ENCODE measurements at regions of chr2 and their contacts with region 1.

Region 1: DNA sequence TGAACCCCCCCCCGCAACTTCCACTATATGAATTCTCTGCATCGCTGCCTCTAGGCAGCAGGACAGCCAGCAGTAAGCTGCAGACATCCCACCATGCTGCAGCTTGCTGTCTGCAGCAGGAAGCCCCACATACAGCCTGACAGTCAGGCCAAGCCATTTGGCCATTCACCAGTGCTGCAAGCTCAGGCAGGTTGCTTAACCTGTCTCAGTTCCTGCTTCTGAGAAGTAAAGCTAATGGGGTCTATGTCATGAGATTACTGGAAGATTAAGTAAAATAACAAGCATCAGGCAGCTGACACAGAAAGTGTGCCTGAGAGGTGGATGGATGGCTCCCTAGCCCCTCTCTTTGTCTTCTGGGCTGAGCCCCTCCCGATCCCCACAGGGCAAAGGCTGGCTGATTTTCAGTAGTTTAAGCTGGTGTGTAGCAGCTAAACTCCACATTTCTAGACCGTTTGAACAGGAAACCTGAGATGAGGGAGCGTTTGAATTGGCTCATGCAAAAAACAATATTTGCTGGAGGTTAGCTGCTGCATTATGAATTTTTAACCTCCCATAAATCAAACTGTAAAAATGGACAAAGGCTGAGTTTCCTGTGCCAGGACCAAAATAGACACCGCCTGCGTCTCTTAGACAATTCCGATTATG is 193.8 kb upstream of the ARL4C start:
- DNase-seq: peak; percentile 42
- ATAC-seq: no peak
- H3K4me3 ChIP-seq: no peak overlapping the region
- H3K27ac ChIP-seq: peak overlapping the region; percentile 79
- H3K4me1 ChIP-seq: peaks cover 98% of the 10 kb centered on the region
- H3K27me3 ChIP-seq: no peaks in the 10 kb centered on the region
- CTCF ChIP-seq: 0 out of 2 replicates have a peak, but pooled peaks have one; percentile 3
- EP300 ChIP-seq: no peak
- POLR2A ChIP-seq: no peak
- RAD21 ChIP-seq: peak; percentile 10; the same call in 1 of the 2 replicates

Region 2: GRCh38 chr2:234587341-234588053 is 103.2 kb before region 1 on chr2:
- CTCF ChIA-PET with region 1: no interaction called
- POLR2A ChIA-PET with region 1: no interaction called
- in situ Hi-C with region 1: no loop called
- intact Hi-C with region 1: no loop called
- DNase-seq: no peak
- ATAC-seq: no peak
- H3K4me3 ChIP-seq: no peak overlapping the region
- H3K27ac ChIP-seq: no peak overlapping the region
- H3K4me1 ChIP-seq: peaks cover 14% of the 10 kb centered on the region; the same call in 1 of the 2 replicates
- H3K27me3 ChIP-seq: peaks cover 4 to 29% of the 10 kb centered on the region in 2 experiments; a peak in 4 of 5 replicates
- CTCF ChIP-seq: no peak
- EP300 ChIP-seq: no peak
- POLR2A ChIP-seq: no peak
- RAD21 ChIP-seq: no peak

Region 3: DNA sequence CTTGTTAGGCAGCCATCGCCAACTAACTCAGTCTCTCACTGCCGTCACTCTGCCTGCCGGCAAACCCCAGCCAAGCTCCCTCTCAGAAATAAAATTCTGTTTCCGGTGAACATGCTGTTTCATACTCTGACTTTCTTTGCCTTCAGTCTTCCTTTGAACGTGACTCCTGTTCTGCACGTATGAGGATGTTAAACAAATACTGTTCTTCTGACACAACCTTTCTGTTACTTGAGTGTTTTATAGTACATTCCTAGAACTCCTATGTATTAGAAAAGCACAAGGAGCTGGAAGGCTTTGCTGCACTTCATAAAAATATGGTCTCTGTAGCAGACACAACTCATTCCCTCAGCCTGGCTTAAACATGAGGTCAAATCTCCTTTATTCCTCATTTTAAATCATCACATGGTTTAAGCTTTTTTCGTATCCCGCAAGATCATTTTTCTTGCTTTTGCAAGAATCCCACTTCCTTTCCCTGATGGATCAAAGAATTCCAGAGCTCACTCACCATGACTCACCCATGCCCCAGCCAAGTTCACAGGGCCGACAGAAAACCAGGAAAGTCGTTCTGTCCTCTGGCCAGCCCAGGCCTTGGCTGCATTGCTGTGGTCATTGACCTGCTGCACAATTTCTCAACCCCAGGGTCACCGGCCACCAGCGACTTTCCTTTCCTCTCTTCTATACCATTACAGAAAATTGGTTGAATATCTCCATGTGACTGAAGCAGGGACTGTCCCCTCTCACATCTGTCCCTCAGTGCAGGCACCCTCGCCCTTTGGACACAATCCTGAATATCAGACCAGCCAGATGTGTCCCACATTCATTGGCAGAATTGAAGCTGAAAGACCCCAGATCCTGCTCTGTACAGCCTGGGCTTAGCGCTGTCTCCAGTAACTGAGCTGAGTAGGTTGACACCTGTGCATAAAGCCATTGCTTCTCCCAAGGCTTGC is 10.7 kb before region 1 on chr2:
- CTCF ChIA-PET with region 1: no interaction called
- POLR2A ChIA-PET with region 1: interaction called, 484 read pairs
- in situ Hi-C with region 1: no loop called
- intact Hi-C with region 1: loop called (anchors 1 kb)
- DNase-seq: peak; percentile 98
- ATAC-seq: peak; percentile 93
- H3K4me3 ChIP-seq: peak overlapping the region in 1 of 3 experiments; percentile 5; a peak in 1 of 6 replicates
- H3K27ac ChIP-seq: peak overlapping the region; percentile 86
- H3K4me1 ChIP-seq: peaks cover 97% of the 10 kb centered on the region
- H3K27me3 ChIP-seq: no peaks in the 10 kb centered on the region
- CTCF ChIP-seq: no peak
- EP300 ChIP-seq: peak; percentile 38 to 97; a peak in 3 of 4 replicates
- POLR2A ChIP-seq: no peak
- RAD21 ChIP-seq: peak; percentile 61; the same call in 1 of the 2 replicates

Region 4: DNA sequence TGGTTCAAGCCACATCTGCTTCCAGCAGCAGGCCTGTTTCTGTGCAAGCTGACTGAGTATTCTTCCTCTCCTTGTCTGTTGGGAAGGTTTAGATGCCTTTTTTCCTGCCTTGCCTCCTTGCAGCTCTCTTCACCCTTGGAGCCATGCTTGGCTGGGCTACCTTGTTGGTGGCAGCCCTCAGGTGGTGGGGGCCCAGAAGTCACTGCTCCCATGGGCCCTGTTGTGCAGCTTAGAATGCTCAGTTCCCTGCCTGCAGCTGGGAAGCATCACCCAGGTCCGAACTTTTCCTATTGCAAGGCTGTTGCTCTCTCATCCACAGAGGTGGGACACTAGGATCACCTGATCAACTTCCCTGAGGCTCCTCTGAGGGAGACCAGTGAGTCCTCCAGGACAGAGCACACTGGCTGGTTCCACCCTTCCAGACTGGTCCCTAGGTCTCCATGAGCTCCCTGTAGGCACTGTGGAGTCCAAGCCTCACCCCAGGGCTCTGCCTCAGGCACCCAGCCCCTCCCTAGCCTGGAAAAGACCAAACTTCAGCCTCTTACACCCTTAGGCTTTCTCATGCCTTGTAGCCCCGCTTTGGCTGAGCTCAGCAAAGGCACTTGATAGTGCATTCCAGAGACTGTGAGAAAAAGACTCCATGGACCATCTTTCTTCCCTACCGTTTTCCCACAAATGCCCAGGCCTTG is 41.9 kb after region 1 on chr2:
- CTCF ChIA-PET with region 1: no interaction called
- POLR2A ChIA-PET with region 1: interaction called, 10 read pairs
- in situ Hi-C with region 1: no loop called
- intact Hi-C with region 1: no loop called
- DNase-seq: no peak
- ATAC-seq: no peak
- H3K4me3 ChIP-seq: no peak overlapping the region
- H3K27ac ChIP-seq: no peak overlapping the region
- H3K4me1 ChIP-seq: peaks cover 45% of the 10 kb centered on the region
- H3K27me3 ChIP-seq: no peaks in the 10 kb centered on the region
- CTCF ChIP-seq: no peak
- EP300 ChIP-seq: no peak
- POLR2A ChIP-seq: no peak
- RAD21 ChIP-seq: no peak

Region 5: DNA sequence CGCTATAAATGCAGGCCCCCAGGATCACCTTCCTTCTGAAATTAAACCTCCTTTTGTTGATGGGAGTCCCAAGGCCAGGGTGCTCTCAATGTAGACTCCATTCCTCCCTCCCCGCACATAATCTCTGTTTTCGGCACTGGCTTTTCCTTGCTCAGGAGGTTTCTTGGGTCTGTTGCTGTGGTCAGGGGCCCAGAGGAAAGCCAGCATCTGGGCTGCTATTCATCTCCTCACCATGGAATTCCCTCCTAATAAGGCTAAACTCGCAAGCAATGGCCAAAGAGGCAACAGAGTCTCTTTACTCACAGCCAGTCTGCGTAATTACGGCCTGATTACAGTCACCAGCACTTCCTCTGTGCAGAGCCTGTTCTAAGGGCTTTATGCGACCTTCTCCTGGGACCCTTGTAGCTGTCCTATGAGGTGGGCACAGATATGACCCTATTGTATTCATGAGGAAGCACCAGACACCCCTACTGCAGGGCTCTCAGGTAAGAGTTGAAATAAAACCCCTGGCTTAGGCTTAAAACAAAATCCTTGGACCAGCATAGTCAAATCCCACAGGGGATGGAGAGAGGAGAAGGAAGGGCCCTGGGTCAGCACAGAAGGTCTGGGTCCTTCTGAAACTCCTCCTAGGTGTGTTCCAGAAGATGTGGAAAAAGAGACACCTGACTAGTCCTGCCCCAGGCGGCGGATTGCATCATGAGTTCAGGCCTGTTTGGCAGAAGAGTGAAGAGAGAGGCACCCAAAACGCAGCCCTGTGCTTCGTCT is 156.1 kb after region 1 on chr2:
- CTCF ChIA-PET with region 1: no interaction called
- POLR2A ChIA-PET with region 1: interaction called, 10 read pairs
- in situ Hi-C with region 1: no loop called
- intact Hi-C with region 1: loop called (anchors 5 kb)
- DNase-seq: no peak
- ATAC-seq: peak; percentile 14; the same call in 2 of the 3 replicates
- H3K4me3 ChIP-seq: no peak overlapping the region
- H3K27ac ChIP-seq: peak overlapping the region; percentile 77
- H3K4me1 ChIP-seq: peaks cover 96% of the 10 kb centered on the region
- H3K27me3 ChIP-seq: no peaks in the 10 kb centered on the region
- CTCF ChIP-seq: no peak
- EP300 ChIP-seq: no peak
- POLR2A ChIP-seq: no peak
- RAD21 ChIP-seq: no peak

Region 6: GRCh38 chr2:234873828-234874173 is 183.1 kb after region 1 on chr2:
- CTCF ChIA-PET with region 1: no interaction called
- POLR2A ChIA-PET with region 1: interaction called, 10 read pairs
- in situ Hi-C with region 1: no loop called
- intact Hi-C with region 1: no loop called
- DNase-seq: no peak
- ATAC-seq: no peak
- H3K4me3 ChIP-seq: no peak overlapping the region
- H3K27ac ChIP-seq: no peak overlapping the region
- H3K4me1 ChIP-seq: peaks cover 78% of the 10 kb centered on the region
- H3K27me3 ChIP-seq: no peaks in the 10 kb centered on the region
- CTCF ChIP-seq: no peak
- EP300 ChIP-seq: no peak
- POLR2A ChIP-seq: no peak
- RAD21 ChIP-seq: no peak

Region 7: DNA sequence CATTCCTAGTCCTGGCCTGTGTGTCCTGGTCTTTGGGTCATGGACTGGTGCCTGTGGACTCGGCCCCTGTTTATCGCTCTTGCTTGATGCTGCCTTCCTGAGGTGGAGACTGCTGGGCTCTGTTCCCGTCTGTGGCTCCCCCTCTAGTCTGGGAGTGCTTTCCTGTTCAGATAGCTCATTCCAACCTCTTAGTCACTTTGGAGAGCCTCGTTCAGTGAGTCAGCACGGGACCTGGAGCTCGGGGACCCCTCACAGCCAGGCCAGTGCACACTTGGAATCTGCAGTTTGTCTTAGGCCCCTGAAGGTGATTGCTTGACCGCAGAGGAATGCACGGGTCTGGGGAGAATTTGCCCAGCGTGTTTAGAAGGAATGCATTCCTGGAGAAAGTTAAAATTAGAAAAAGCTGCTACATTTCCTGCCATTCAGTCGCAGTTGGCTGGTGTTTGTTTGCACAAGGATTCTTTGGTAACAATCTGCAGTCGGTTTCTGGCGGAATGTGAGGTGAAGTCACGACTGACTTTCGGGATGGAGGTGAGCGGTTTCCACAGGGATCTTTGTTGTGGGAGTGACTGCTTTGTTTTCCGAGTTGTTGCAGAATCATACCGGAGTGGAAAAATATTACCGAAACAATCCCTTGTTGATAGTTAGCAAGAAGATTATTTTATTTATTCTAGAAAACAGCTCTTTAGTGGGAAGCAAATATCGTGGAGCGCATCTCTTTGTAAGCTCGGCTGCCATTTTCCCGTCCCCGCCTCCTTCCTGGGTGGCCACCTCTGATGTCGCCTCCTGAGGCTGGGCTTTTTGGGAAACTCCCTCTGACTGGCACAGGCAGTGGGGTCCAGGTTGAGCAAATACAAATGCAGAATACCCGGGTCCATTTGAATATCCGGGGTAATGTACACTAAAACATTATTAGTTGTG is 290.8 kb after region 1 on chr2:
- CTCF ChIA-PET with region 1: no interaction called
- POLR2A ChIA-PET with region 1: interaction called, 16 read pairs
- in situ Hi-C with region 1: no loop called
- intact Hi-C with region 1: loop called (anchors 2 kb)
- DNase-seq: peak; percentile 94
- ATAC-seq: peak; percentile 59
- H3K4me3 ChIP-seq: peak overlapping the region; percentile 41 to 64 (median 48)
- H3K27ac ChIP-seq: peak overlapping the region; percentile 88
- H3K4me1 ChIP-seq: peaks cover 100% of the 10 kb centered on the region
- H3K27me3 ChIP-seq: no peaks in the 10 kb centered on the region; a peak in 1 of 5 replicates
- CTCF ChIP-seq: peak; percentile 63
- EP300 ChIP-seq: peak; percentile 3 to 71; a peak in 3 of 4 replicates
- POLR2A ChIP-seq: peak; percentile 27 to 72; a peak in 3 of 4 replicates
- RAD21 ChIP-seq: peak; percentile 36; the same call in 1 of the 2 replicates

Region 8: DNA sequence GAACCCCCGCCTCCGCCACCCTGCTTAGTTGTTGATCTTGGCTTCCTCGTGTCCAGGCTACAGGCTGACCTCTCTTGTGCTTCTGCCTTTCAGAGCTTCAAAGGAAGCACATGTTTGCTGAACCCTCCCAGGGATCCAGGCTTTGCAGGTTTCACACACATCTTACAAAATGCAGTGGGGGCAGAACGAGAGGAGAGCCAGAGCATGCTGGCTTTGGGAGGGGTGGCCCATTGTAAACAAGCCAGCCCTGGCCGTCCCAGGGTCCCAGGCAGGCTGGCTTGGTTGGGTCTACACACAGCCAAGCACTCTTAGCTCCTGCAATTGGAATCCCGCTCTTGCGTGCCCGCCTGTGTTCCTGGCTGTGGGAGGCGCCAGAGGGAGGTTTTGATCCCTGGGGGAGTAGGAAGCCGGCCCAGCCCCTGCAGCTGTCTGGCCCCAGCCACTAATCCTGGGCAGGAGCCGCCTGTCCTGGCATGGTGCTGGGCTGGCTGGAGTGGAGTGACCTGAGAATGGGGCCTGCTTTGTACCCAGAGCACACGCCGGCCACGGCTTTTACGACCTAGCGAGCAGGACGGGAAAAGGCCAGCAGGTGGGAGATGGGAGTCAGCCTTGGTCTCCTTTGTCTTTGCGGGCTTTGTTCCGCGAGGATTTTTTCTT is 315.0 kb after region 1 on chr2:
- CTCF ChIA-PET with region 1: no interaction called
- POLR2A ChIA-PET with region 1: interaction called, 16 read pairs
- in situ Hi-C with region 1: no loop called
- intact Hi-C with region 1: no loop called
- DNase-seq: peak; percentile 98
- ATAC-seq: peak; percentile 88
- H3K4me3 ChIP-seq: peak overlapping the region in 1 of 3 experiments; percentile 29; a peak in 2 of 6 replicates
- H3K27ac ChIP-seq: peak overlapping the region; percentile 70
- H3K4me1 ChIP-seq: peaks cover 84% of the 10 kb centered on the region
- H3K27me3 ChIP-seq: no peaks in the 10 kb centered on the region
- CTCF ChIP-seq: peak; percentile 83
- EP300 ChIP-seq: peak; percentile 70 to 88; a peak in 3 of 4 replicates
- POLR2A ChIP-seq: no peak
- RAD21 ChIP-seq: peak; percentile 83